A549 (cell line): ENCODE measurements at regions of chr7 and their contacts with region 1.

Region 1: GRCh38 chr7:48109848-48110663 is 21.0 kb downstream of the UPP1 start:
- DNase-seq: peak; percentile 64 to 75
- ATAC-seq: peak; percentile 63 to 82
- H3K4me3 ChIP-seq: no peak overlapping the region
- H3K27ac ChIP-seq: no peak overlapping the region
- H3K4me1 ChIP-seq: no peaks in the 10 kb centered on the region
- CTCF ChIP-seq: peak; percentile 98
- EP300 ChIP-seq: no peak
- POLR2A ChIP-seq: no peak
- RAD21 ChIP-seq: peak; percentile 96 to 97

Region 2: GRCh38 chr7:47893247-47893646 is 216.8 kb before region 1 on chr7:
- CTCF ChIA-PET with region 1: no interaction called
- POLR2A ChIA-PET with region 1: no interaction called
- DNase-seq: peak; percentile 22 to 35
- ATAC-seq: peak in 1 of 2 experiments; percentile 76; a peak in 3 of 6 replicates
- H3K4me3 ChIP-seq: no peak overlapping the region
- H3K27ac ChIP-seq: no peak overlapping the region
- H3K4me1 ChIP-seq: no peaks in the 10 kb centered on the region
- CTCF ChIP-seq: no peak
- EP300 ChIP-seq: no peak
- POLR2A ChIP-seq: no peak
- RAD21 ChIP-seq: no peak

Region 3: DNA sequence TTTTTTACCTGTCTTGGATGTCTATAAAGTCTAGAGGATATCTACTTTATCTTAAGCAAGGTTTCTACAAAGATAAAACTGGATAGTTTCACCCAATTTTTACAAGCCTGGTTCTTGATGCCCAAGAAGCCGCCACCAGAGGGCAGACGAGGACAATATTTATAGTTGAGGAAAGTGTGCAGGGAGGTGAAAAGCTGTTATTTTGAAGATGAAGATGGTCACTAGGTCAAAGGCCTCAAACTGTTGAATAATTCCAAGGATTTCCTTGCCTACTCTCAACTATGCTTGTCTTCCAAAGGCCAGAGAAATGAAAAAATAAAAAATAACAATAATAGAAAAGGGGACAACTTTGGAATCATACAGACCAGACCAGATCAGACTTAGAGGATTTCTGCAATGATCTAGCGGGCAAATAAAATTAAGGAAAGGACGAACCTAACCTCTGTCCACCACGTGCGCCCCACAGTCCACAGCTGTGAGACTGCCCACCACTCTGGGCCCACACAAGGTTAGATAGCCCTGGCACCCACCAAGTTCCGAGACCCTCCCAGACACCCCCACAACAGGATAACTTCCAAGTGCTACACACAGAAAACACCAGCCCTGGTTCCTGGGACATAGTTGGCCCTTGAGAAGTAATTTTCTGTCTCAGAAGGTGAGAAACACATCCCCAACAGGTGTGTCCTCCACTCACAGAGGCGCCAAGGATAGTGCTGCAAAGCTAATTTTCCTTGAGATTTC is 164.6 kb before region 1 on chr7:
- CTCF ChIA-PET with region 1: interaction called, 63 read pairs
- POLR2A ChIA-PET with region 1: no interaction called
- DNase-seq: peak; percentile 62 to 71
- ATAC-seq: peak; percentile 70 to 82; a peak in 5 of 6 replicates
- H3K4me3 ChIP-seq: no peak overlapping the region
- H3K27ac ChIP-seq: no peak overlapping the region
- H3K4me1 ChIP-seq: peaks cover 13% of the 10 kb centered on the region
- CTCF ChIP-seq: peak; percentile 91
- EP300 ChIP-seq: no peak
- POLR2A ChIP-seq: no peak
- RAD21 ChIP-seq: peak; percentile 86 to 88

Region 4: GRCh38 chr7:47968847-47969774 is 140.9 kb before region 1 on chr7:
- CTCF ChIA-PET with region 1: interaction called, 13 read pairs
- POLR2A ChIA-PET with region 1: no interaction called
- DNase-seq: peak; percentile 75 to 82
- ATAC-seq: peak; percentile 81 to 96
- H3K4me3 ChIP-seq: no peak overlapping the region
- H3K27ac ChIP-seq: no peak overlapping the region
- H3K4me1 ChIP-seq: no peaks in the 10 kb centered on the region
- CTCF ChIP-seq: peak; percentile 79
- EP300 ChIP-seq: no peak
- POLR2A ChIP-seq: no peak
- RAD21 ChIP-seq: peak; percentile 73 to 83

Region 5: DNA sequence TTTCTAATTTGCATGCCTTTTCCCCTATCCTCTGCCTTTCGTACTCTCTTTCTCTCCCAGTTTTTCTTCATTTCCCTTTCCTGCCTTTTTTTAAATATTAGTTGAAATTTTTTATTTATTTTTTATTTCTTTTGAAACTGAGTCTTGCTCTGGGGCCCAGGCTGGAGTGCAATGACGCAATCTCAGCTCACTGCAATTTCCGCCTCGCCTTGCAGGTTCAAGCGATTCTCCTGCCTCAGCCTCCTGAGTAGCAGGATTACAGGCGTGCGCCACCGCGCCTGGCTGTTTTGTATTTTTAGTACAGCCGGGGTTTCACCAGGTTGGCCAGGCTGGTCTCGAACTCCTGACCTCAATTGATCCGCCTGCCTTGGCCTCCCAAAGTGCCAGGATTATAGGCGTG is 110.6 kb before region 1 on chr7:
- CTCF ChIA-PET with region 1: interaction called, 173 read pairs
- POLR2A ChIA-PET with region 1: no interaction called
- DNase-seq: no peak
- ATAC-seq: no peak
- H3K4me3 ChIP-seq: no peak overlapping the region
- H3K27ac ChIP-seq: no peak overlapping the region
- H3K4me1 ChIP-seq: peaks cover 4% of the 10 kb centered on the region; the same call in 2 of the 3 replicates
- CTCF ChIP-seq: no peak
- EP300 ChIP-seq: no peak
- POLR2A ChIP-seq: no peak
- RAD21 ChIP-seq: no peak

Region 6: GRCh38 chr7:48130658-48131108 is 20.6 kb after region 1 on chr7:
- CTCF ChIA-PET with region 1: interaction called, 16 read pairs
- POLR2A ChIA-PET with region 1: no interaction called
- DNase-seq: no peak
- ATAC-seq: no peak
- H3K4me3 ChIP-seq: no peak overlapping the region
- H3K27ac ChIP-seq: no peak overlapping the region
- H3K4me1 ChIP-seq: no peaks in the 10 kb centered on the region
- CTCF ChIP-seq: no peak
- EP300 ChIP-seq: no peak
- POLR2A ChIP-seq: no peak
- RAD21 ChIP-seq: no peak

Region 7: GRCh38 chr7:48168159-48168558 is 58.1 kb after region 1 on chr7:
- CTCF ChIA-PET with region 1: no interaction called
- POLR2A ChIA-PET with region 1: no interaction called
- DNase-seq: peak in 1 of 2 experiments; percentile 18
- ATAC-seq: no peak
- H3K4me3 ChIP-seq: no peak overlapping the region
- H3K27ac ChIP-seq: no peak overlapping the region
- H3K4me1 ChIP-seq: no peaks in the 10 kb centered on the region
- CTCF ChIP-seq: no peak
- EP300 ChIP-seq: no peak
- POLR2A ChIP-seq: no peak
- RAD21 ChIP-seq: no peak